WTC11 (cell line): ENCODE measurements at regions of chr15 and their contacts with region 1.

Region 1: GRCh38 chr15:88454867-88455810 is 12.0 kb downstream of the MRPL46 start:
- DNase-seq: peak; percentile 71
- ATAC-seq: peak; percentile 90
- H3K4me3 Mint-ChIP-seq: no peak overlapping the region
- H3K27ac Mint-ChIP-seq: no peak overlapping the region
- H3K4me1 Mint-ChIP-seq: peaks cover 7% of the 10 kb centered on the region
- H3K27me3 Mint-ChIP-seq: peaks cover 3% of the 10 kb centered on the region
- CTCF ChIP-seq: peak; percentile 60

Region 2: GRCh38 chr15:87998630-87999029 is 456.5 kb before region 1 on chr15:
- CTCF ChIA-PET with region 1: no interaction called
- POLR2A ChIA-PET with region 1: no interaction called
- DNase-seq: no peak
- ATAC-seq: no peak
- H3K4me3 Mint-ChIP-seq: no peak overlapping the region
- H3K27ac Mint-ChIP-seq: no peak overlapping the region
- H3K4me1 Mint-ChIP-seq: no peaks in the 10 kb centered on the region
- H3K27me3 Mint-ChIP-seq: no peaks in the 10 kb centered on the region
- CTCF ChIP-seq: no peak

Region 3: DNA sequence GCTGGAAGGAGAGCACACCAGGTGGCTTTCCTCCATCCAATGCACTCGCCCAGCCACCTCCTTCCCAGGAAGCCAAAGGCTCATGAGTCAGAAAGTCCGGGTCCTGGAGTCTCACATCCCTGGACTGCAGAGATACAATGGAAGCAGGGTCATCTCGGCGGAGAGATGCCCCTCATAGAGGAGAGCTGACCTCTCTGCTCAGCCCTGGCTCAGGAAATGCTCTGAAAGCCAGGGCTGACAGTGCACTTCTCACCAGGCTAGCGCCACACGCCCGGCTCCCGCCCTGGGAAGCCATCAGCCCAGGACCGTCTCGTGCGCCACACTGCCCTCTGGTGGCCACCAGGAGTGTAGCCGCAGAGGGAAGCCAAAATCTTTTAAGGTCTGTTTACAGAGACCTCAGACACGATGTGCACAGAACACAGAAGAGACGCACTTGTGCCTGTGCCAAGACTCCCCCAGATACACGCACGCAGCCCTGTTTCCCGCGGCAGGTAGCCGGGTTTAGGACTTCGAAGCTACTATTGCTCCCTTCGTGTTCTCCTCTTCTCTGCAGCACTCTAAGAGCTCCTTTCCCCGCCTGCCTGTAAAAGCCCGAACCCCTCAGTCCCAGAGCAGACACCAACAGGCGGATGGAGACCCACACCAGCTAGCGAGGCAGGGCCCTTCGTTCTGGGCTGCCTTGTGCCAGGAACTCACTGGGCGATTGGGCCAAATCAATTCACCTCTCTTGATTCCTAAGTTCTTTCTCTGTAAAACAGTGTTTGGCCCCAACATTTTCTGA is 208.3 kb before region 1 on chr15:
- CTCF ChIA-PET with region 1: interaction called, 27 read pairs
- POLR2A ChIA-PET with region 1: no interaction called
- DNase-seq: peak; percentile 84
- ATAC-seq: peak; percentile 89
- H3K4me3 Mint-ChIP-seq: peak overlapping the region; percentile 52
- H3K27ac Mint-ChIP-seq: no peak overlapping the region
- H3K4me1 Mint-ChIP-seq: peaks cover 17% of the 10 kb centered on the region
- H3K27me3 Mint-ChIP-seq: peaks cover 3% of the 10 kb centered on the region; the same call in 1 of the 2 replicates
- CTCF ChIP-seq: peak; percentile 94

Region 4: DNA sequence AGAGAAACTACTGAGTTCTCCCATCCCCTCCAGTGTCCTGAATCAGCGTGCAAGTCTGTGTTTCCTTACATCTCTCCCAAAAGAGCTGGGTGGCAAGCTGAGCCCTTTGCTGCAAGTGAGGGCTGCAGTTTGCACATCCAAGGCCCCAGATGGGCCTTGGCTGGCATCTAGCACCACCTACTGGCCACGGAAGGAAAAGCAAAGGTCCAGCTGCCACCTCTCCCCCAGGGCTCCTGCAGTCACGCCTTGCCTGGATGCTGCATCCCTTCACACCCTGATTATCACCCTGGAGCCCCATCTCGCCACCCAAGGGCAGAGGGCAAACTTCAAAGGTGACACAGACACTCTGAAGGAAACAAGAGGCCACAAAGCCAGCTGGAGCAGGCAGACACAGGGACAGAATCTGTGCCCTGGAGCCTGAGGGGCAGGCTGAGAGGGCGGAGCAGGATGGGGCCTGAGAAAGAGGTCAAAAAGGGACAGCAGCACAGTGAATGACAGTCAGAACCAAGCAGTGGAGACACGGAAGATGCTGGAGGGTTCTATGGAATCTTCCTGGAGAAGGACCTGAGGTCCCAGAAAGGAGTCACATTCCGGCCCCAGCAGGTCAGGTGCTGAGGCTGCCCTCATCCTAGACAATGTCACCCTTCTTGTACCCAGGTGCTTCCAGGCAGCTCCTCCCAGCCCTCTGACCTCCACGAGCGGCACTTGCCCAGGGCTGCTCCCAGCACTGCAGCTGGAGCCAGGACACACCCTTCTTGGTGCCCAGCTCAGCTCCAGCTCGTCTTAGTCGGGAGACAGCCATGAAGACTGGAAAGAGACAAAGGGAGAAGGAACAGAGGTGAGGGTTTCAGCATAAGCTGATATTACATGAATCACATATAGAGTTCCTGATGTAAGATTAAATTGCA is 180.3 kb before region 1 on chr15:
- CTCF ChIA-PET with region 1: interaction called, 29 read pairs
- POLR2A ChIA-PET with region 1: no interaction called
- DNase-seq: peak; percentile 87
- ATAC-seq: peak; percentile 94
- H3K4me3 Mint-ChIP-seq: no peak overlapping the region
- H3K27ac Mint-ChIP-seq: no peak overlapping the region
- H3K4me1 Mint-ChIP-seq: no peaks in the 10 kb centered on the region
- H3K27me3 Mint-ChIP-seq: peaks cover 10% of the 10 kb centered on the region
- CTCF ChIP-seq: peak; percentile 87

Region 5: GRCh38 chr15:88331280-88331679 is 123.9 kb before region 1 on chr15:
- CTCF ChIA-PET with region 1: interaction called, 23 read pairs
- POLR2A ChIA-PET with region 1: no interaction called
- DNase-seq: peak; percentile 91
- ATAC-seq: peak; percentile 97
- H3K4me3 Mint-ChIP-seq: no peak overlapping the region
- H3K27ac Mint-ChIP-seq: no peak overlapping the region
- H3K4me1 Mint-ChIP-seq: no peaks in the 10 kb centered on the region
- H3K27me3 Mint-ChIP-seq: no peaks in the 10 kb centered on the region; the same call in 1 of the 2 replicates
- CTCF ChIP-seq: peak; percentile 77

Region 6: DNA sequence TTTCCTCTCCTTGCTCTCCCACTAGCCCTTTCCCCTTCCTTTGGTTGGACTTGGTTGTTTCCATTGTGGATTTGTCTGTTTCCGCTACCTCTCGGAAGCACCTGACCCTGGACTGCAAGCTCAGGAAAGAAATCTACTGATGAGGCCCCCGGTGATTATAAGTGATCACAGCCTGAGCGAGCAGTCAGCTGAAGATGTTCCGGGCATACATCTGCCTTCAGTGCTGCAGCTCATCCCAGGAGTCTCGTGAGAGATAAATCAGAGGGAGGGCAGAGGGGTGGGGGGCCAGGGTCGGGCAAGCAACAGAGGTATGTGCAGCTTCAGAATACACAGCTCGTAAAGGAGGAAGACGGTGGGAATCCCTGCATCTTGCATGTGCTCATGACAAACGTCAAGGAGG is 90.0 kb before region 1 on chr15:
- CTCF ChIA-PET with region 1: no interaction called
- POLR2A ChIA-PET with region 1: no interaction called
- DNase-seq: no peak
- ATAC-seq: no peak
- H3K4me3 Mint-ChIP-seq: no peak overlapping the region
- H3K27ac Mint-ChIP-seq: no peak overlapping the region
- H3K4me1 Mint-ChIP-seq: peaks cover 6% of the 10 kb centered on the region
- H3K27me3 Mint-ChIP-seq: peaks cover 19% of the 10 kb centered on the region
- CTCF ChIP-seq: no peak

Region 7: GRCh38 chr15:88440021-88440420 is 15.1 kb before region 1 on chr15:
- CTCF ChIA-PET with region 1: interaction called, 35 read pairs
- POLR2A ChIA-PET with region 1: no interaction called
- DNase-seq: no peak
- ATAC-seq: no peak
- H3K4me3 Mint-ChIP-seq: no peak overlapping the region
- H3K27ac Mint-ChIP-seq: no peak overlapping the region
- H3K4me1 Mint-ChIP-seq: peaks cover 7% of the 10 kb centered on the region; the same call in 1 of the 2 replicates
- H3K27me3 Mint-ChIP-seq: peaks cover 22% of the 10 kb centered on the region
- CTCF ChIP-seq: no peak